Naive thymus-derived CD8-positive, alpha-beta T cell (primary cell): ENCODE measurements at regions of chr12 and their contacts with region 1.

Region 1: DNA sequence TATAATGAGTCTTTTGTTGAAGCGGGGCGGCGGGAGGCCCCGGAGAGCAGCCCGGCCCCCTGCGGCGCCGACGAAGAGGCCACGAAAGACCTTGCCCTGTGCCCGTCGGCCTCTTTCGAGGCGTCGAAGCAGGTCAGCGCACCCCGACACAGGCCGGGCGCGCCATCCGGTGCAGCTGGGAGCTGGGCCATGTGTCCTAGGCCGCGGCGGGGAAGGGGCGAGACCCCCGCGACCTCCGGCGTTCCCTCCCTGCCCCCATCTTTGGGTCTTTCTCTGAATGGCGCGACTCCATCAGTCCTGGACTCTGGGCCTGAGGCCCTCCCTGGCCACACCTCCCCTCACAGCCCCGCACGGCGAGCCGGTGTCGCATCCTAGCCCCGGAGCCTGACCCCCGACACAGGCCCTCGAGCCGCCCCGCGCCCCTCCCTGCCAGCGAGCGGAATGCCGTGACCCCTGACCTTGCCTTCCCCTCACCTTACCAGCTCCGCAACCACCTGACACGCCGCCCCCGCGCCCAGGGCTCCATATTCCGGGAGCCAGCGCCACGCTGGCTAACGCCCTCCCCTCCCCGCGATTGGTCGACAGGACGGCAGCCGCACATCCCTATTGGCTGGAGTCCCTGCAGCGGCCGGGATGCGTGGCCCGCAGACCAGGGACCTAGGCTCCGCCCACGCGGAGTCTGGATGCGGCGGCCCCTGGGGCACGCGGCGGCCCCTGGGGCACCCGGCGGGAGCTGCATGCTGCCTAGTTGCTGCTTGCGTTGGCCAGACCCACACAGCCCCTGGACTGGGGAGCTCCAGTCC is at the start of gene SLC11A2:
- DNase-seq: peak; percentile 83 to 94 (median 87)
- ATAC-seq: peak; percentile 90 to 92
- H3K4me3 Mint-ChIP-seq: peak within 1 kb of the TSS; percentile 94 to 99 (median 96)
- H3K27ac Mint-ChIP-seq: peak within 1 kb of the TSS; percentile 87 to 98 (median 96)
- H3K4me1 Mint-ChIP-seq: peaks cover 36 to 68% (median 61%) of the 10 kb centered on the region in 4 donors
- H3K27me3 Mint-ChIP-seq: no peaks in the 10 kb centered on the region
- polyA plus RNA-seq, gene SLC11A2: 6.9 to 17.2 (median 9.0) TPM

Region 2: DNA sequence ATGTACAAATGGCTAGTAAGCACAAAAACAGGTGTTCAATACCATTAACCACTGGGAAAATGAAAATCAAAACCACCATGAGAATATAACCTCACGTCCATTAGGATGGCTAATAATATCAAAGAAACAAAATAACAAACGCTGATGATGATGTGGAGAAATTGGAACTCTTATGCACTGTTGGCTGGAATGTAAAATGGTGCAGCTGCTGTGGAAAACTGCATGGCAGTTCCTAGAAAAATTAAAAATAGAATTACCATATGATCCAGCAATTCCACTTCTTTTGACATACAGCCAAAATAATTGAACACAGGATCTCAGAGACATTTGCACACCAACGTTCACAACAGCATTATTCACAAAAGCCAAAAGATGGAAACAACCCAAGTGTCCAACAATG is 131.8 kb before region 1 on chr12:
- POLR2A ChIA-PET with region 1: no interaction called
- DNase-seq: no peak
- ATAC-seq: no peak
- H3K4me3 Mint-ChIP-seq: no peak overlapping the region
- H3K27ac Mint-ChIP-seq: no peak overlapping the region
- H3K4me1 Mint-ChIP-seq: no peaks in the 10 kb centered on the region
- H3K27me3 Mint-ChIP-seq: no peaks in the 10 kb centered on the region

Region 3: DNA sequence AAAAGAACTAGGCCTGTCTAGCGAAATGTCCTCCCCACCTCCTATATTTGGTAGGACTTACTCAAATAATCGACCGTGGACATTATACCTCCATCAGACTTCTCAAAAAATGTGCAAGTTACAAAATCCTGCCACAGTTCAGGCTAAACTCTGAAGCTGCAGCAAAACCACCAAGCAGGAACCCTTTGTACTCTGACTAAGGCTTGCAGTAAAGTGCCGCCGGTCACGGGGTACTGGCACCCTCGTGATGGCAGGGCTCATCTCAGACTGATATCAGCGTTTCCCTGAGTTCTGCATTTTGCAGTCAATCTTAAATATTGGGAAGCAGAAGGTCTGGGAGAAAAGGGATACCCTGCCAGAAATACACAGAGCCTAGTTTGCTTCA is 17.0 kb before region 1 on chr12:
- POLR2A ChIA-PET with region 1: interaction called, 23 read pairs
- DNase-seq: peak; percentile 51 to 84 (median 64)
- ATAC-seq: peak; percentile 100
- H3K4me3 Mint-ChIP-seq: peak overlapping the region; percentile 70 to 93 (median 83)
- H3K27ac Mint-ChIP-seq: peak overlapping the region; percentile 82 to 95 (median 86)
- H3K4me1 Mint-ChIP-seq: peaks cover 12 to 58% (median 36%) of the 10 kb centered on the region in 4 donors
- H3K27me3 Mint-ChIP-seq: no peaks in the 10 kb centered on the region

Region 4: GRCh38 chr12:51047655-51048540 is 21.9 kb after region 1 on chr12 and contains the start of gene LETMD1:
- POLR2A ChIA-PET with region 1: interaction called, 14 read pairs
- DNase-seq: peak; percentile 83 to 97 (median 91)
- ATAC-seq: peak; percentile 95 to 96
- H3K4me3 Mint-ChIP-seq: peak within 1 kb of the TSS; percentile 91 to 99 (median 95)
- H3K27ac Mint-ChIP-seq: peak within 1 kb of the TSS; percentile 89 to 99 (median 97)
- H3K4me1 Mint-ChIP-seq: peaks cover 19 to 35% (median 33%) of the 10 kb centered on the region in 4 donors
- H3K27me3 Mint-ChIP-seq: no peaks in the 10 kb centered on the region
- polyA plus RNA-seq, gene LETMD1: 30.1 to 36.3 (median 30.9) TPM

Region 5: GRCh38 chr12:51083126-51083833 is 57.2 kb after region 1 on chr12 and contains the start of gene CSRNP2:
- POLR2A ChIA-PET with region 1: interaction called, 12 read pairs
- DNase-seq: peak; percentile 92 to 97 (median 94)
- ATAC-seq: peak; percentile 99
- H3K4me3 Mint-ChIP-seq: peak within 1 kb of the TSS; percentile 91 to 99 (median 96)
- H3K27ac Mint-ChIP-seq: peak within 1 kb of the TSS; percentile 89 to 98 (median 95)
- H3K4me1 Mint-ChIP-seq: peaks cover 18 to 41% (median 37%) of the 10 kb centered on the region in 4 donors
- H3K27me3 Mint-ChIP-seq: no peaks in the 10 kb centered on the region
- polyA plus RNA-seq, gene CSRNP2: 2.7 to 3.6 (median 2.7) TPM